Activated T-helper 1 cell treated with anti-CD3 and anti-CD28 coated beads, Interleukin-12 subunit alpha, Interleukin-12 subunit beta, Interleukin-2, Interleukin-4 antibody, amounts not matched to agents 30 ng/mL and 10 ng/mL and 1 ng/mL, durations not matched to agents 14 hours and 24 hours and 36 hours (primary cell): ENCODE measurements at regions of chr20 and their contacts with region 1.

Region 1: DNA sequence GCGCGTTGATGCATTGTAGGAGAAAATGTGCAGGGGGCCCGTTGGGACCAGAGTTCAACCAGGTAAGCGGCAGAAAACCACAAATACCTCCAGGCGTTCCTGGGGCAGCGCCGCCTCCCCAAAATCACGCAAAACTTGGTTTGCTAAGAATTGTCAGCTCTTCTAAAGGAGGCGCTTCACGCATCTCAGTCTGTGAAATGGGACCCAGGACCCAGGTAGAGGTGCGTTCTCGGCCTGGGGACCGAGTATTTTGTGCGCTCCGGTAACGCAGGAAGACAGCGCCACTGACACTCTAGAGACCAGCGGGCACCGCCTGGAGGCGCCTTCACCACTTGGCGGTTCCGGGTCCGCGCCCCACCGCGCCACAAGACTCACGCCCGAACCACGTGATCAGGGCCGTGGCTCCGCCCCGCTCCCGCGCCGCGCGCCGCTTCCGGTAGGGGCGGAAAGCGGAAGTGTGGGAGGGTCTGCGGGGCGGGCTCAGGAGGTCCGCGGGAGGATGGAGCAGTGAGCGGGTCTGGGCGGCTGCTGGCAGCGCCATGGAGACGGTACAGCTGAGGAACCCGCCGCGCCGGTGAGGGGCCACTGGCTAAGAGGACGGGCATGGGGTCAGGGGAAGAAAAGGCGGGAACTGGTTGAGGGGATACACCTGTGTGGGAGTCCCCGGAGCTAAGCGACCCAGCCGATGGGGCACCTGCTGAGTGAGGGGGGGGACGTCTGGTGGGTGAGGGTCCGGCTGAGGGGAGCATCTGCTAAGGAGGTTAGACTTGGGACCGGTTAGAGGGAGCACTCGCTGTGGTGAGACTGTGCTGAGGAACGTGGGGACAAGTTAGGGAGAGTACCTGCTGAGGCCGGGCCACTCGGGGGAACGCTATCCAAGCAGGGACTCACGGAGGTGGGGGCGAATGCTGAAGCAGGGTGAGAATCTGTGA is at the start of gene STK4:
- DNase-seq: peak; percentile 95
- H3K4me3 Mint-ChIP-seq: peak within 1 kb of the TSS; percentile 92
- H3K27ac Mint-ChIP-seq: peak within 1 kb of the TSS; percentile 88
- H3K4me1 Mint-ChIP-seq: peaks cover 77% of the 10 kb centered on the region
- H3K27me3 Mint-ChIP-seq: no peaks in the 10 kb centered on the region
- total RNA-seq, gene STK4: 149 and 155 TPM in 2 replicates

Region 2: GRCh38 chr20:44521484-44522481 is 444.5 kb before region 1 on chr20 and contains the start of gene SERINC3:
- intact Hi-C with region 1: loop called (anchors 10 kb)
- DNase-seq: peak; percentile 96
- H3K4me3 Mint-ChIP-seq: peak within 1 kb of the TSS; percentile 88
- H3K27ac Mint-ChIP-seq: peak within 1 kb of the TSS; percentile 89
- H3K4me1 Mint-ChIP-seq: peaks cover 43% of the 10 kb centered on the region
- H3K27me3 Mint-ChIP-seq: no peaks in the 10 kb centered on the region
- total RNA-seq, gene SERINC3: 51.3 and 54.6 TPM in 2 replicates

Region 3: DNA sequence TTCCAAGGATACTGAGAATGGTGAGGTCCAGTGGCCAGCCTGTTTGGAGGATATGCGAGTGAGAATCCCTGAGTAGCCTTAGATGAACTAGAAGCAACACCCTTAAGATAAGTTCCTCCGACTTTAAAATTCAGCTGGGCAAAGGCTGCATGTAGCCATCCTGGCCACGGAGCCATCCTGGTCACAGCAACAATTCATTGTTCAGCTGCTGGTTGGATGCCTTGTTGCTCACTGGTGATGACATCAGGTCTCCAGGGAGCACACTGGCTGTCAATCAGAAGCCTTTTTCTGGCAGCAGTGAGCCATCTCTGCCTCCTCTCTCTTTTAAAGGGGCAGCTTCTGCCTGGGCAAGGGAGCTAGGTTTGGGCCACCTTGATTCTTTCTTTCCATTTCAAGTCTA is 133.6 kb before region 1 on chr20:
- intact Hi-C with region 1: no loop called
- DNase-seq: no peak
- H3K4me3 Mint-ChIP-seq: no peak overlapping the region
- H3K27ac Mint-ChIP-seq: no peak overlapping the region
- H3K4me1 Mint-ChIP-seq: peaks cover 5% of the 10 kb centered on the region
- H3K27me3 Mint-ChIP-seq: peaks cover 18% of the 10 kb centered on the region

Region 4: GRCh38 chr20:44909872-44910689 is 56.2 kb before region 1 on chr20 and contains the start of gene PABPC1L:
- intact Hi-C with region 1: loop called (anchors 2 kb)
- DNase-seq: peak; percentile 72
- H3K4me3 Mint-ChIP-seq: peak within 1 kb of the TSS; percentile 87
- H3K27ac Mint-ChIP-seq: peak within 1 kb of the TSS; percentile 84
- H3K4me1 Mint-ChIP-seq: peaks cover 32% of the 10 kb centered on the region
- H3K27me3 Mint-ChIP-seq: no peaks in the 10 kb centered on the region
- total RNA-seq, gene PABPC1L: 101 and 106 TPM in 2 replicates

Region 5: GRCh38 chr20:44942264-44942973 is 23.9 kb before region 1 on chr20:
- intact Hi-C with region 1: no loop called
- DNase-seq: no peak
- H3K4me3 Mint-ChIP-seq: no peak overlapping the region
- H3K27ac Mint-ChIP-seq: no peak overlapping the region
- H3K4me1 Mint-ChIP-seq: no peaks in the 10 kb centered on the region
- H3K27me3 Mint-ChIP-seq: no peaks in the 10 kb centered on the region

Region 6: GRCh38 chr20:45095753-45096371 is 129.6 kb after region 1 on chr20:
- intact Hi-C with region 1: loop called (anchors 2 kb)
- DNase-seq: peak; percentile 31
- H3K4me3 Mint-ChIP-seq: no peak overlapping the region
- H3K27ac Mint-ChIP-seq: no peak overlapping the region
- H3K4me1 Mint-ChIP-seq: peaks cover 8% of the 10 kb centered on the region
- H3K27me3 Mint-ChIP-seq: peaks cover 35% of the 10 kb centered on the region

Region 7: DNA sequence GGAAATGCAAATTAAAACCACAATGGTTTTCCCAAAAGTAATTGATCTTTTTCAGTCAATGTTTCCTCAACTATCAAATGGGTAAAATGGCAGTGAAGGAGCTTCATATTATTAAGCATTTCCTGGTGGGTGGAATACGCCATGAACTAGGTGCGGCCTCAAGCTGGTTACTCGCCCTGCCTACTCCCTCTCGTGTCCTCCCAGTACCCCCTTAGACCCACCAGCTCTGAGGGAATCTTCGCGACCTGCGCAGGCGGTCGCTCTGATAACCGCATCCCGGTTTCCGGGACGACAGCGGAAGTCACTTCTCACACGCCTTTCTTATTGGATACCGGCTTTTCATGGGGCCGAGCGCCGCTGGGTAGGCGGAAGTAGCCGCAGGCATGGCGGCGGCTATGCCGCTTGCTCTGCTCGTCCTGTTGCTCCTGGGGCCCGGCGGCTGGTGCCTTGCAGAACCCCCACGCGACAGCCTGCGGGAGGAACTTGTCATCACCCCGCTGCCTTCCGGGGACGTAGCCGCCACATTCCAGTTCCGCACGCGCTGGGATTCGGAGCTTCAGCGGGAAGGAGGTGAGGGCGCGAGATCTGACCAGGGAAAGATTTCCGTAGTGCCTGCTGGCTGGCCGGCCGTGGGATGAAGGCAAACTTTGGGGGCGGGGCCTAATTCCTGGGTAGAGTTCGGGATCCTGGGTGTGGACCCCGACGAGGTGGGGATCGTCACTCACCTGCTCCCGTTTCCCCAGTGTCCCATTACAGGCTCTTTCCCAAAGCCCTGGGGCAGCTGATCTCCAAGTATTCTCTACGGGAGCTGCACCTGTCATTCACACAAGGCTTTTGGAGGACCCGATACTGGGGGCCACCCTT is 449.7 kb after region 1 on chr20 and contains the start of gene PIGT:
- intact Hi-C with region 1: loop called (anchors 10 kb)
- DNase-seq: peak; percentile 86
- H3K4me3 Mint-ChIP-seq: peak within 1 kb of the TSS; percentile 94
- H3K27ac Mint-ChIP-seq: peak within 1 kb of the TSS; percentile 90
- H3K4me1 Mint-ChIP-seq: peaks cover 39% of the 10 kb centered on the region
- H3K27me3 Mint-ChIP-seq: no peaks in the 10 kb centered on the region
- total RNA-seq, gene PIGT: 89.8 and 90.6 TPM in 2 replicates

Region 8: DNA sequence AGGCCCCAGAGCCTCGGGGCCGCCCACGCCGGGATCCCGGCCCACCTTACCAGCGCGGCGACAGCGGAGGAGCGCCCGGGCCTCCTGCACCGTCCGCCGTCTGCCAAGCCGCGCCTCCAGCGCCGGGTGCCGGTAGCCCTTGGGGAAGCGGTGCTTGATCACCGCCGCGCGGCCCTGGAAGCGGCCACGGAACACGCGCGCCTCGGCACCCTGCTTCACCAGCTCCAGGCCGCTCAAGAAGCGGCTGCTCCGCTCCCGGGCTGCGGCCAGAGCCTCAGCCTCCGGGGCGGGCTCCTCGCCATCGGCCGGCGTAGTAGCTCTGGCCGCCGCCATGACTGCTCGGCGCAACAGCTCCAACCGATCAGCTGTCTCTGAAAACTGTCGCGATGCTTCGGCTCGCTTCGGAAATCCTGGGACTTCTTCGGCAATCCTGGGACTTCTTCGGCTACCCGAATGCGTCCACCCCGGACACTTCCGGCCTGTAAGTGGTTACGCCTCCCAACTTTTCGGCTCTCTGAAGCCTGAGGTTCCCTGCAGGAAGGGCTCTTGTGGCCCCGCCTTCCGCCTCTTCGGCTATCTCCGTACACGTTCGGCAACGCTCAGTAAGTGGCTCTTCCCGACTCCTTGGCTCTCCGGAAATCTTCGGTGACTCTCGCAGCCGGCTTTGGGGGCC is 1722.9 kb after region 1 on chr20 and contains the start of gene TP53RK:
- intact Hi-C with region 1: loop called (anchors 5 kb)
- DNase-seq: peak; percentile 94
- H3K4me3 Mint-ChIP-seq: peak within 1 kb of the TSS; percentile 88
- H3K27ac Mint-ChIP-seq: peak within 1 kb of the TSS; percentile 91
- H3K4me1 Mint-ChIP-seq: peaks cover 52% of the 10 kb centered on the region
- H3K27me3 Mint-ChIP-seq: peaks cover 3% of the 10 kb centered on the region
- total RNA-seq, gene TP53RK: 16.8 and 18.5 TPM in 2 replicates